ENCODE measurements at regions of chr22 and their contacts with region 1.

Region 1: DNA sequence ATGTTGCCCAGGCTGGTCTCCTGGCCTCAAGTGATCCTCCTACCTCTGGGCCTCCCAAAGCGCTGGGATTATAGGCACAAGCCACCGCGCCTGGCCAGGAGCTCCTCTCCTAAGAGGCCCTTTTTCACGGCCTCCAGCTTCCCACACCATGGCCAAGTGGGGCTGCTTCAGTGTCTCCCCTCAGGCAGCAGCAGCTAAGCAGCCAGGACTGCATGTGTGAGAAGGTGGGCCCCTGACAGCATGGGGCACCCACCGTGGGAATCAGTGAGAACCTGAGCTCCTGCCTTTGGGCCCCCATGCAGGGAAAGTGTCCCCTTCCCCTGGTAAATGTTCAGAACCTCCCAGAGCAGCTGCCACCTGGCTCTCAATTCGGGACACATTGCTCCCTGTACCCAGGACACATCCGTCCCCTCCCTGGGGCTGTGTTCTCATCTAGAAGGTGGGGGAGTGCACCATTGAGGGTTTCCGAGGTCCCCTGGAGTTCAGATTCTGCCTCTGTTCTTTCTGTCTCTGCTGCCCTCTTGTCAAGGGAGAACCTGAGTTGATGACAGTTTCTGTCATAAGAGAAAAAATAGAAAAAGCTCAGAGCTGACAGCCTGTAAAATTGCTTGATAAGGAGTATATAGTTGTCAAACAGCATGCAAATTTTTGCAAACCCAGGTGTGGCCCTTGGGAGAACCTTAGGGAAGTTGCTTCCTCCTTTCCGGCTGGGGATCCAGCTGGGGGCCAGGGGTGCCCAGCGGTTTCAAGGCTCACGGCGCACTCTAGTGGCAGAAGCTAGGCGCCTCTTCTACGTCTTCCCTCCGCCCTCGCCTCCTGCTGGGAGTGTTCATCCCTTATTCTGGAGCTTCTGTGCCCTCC is 29.7 kb downstream of the FAM83F start:
- DNase-seq: peak; percentile 43 to 77 (median 53)
- H3K4me3 ChIP-seq: no peak overlapping the region
- H3K27ac ChIP-seq: no peak overlapping the region
- H3K4me1 ChIP-seq: no peaks in the 10 kb centered on the region
- H3K27me3 ChIP-seq: no peaks in the 10 kb centered on the region
- CTCF ChIP-seq: peak; percentile 25 to 59 (median 51)
- EP300 ChIP-seq: no peak
- POLR2A ChIP-seq: no peak

Region 2: GRCh38 chr22:39532215-39533071 is 492.0 kb before region 1 on chr22 and contains the start of gene RPS19BP1:
- intact Hi-C with region 1: loop called in 3 of 4 experiments (anchors 2 to 10 kb)
- DNase-seq: peak; percentile 99 to 100 (median 100)
- H3K4me3 ChIP-seq: peak within 1 kb of the TSS; percentile 68
- H3K27ac ChIP-seq: peak within 1 kb of the TSS; percentile 38 to 75
- H3K4me1 ChIP-seq: peaks cover 14% of the 10 kb centered on the region
- H3K27me3 ChIP-seq: no peaks in the 10 kb centered on the region
- CTCF ChIP-seq: no peak
- EP300 ChIP-seq: no peak
- POLR2A ChIP-seq: peak; percentile 68
- total RNA-seq, gene RPS19BP1: 41.9 to 117 (median 44.2) TPM

Region 3: GRCh38 chr22:39543095-39543494 is 481.3 kb before region 1 on chr22:
- intact Hi-C with region 1: loop called (anchors 2 to 10 kb)
- DNase-seq: no peak
- H3K4me3 ChIP-seq: no peak overlapping the region
- H3K27ac ChIP-seq: no peak overlapping the region
- H3K4me1 ChIP-seq: no peaks in the 10 kb centered on the region
- H3K27me3 ChIP-seq: no peaks in the 10 kb centered on the region
- CTCF ChIP-seq: no peak
- EP300 ChIP-seq: no peak
- POLR2A ChIP-seq: no peak

Measured in ovary (tissue), 10 donors.